ENCODE measurements at regions of chr10 and their contacts with region 1.

Region 1: DNA sequence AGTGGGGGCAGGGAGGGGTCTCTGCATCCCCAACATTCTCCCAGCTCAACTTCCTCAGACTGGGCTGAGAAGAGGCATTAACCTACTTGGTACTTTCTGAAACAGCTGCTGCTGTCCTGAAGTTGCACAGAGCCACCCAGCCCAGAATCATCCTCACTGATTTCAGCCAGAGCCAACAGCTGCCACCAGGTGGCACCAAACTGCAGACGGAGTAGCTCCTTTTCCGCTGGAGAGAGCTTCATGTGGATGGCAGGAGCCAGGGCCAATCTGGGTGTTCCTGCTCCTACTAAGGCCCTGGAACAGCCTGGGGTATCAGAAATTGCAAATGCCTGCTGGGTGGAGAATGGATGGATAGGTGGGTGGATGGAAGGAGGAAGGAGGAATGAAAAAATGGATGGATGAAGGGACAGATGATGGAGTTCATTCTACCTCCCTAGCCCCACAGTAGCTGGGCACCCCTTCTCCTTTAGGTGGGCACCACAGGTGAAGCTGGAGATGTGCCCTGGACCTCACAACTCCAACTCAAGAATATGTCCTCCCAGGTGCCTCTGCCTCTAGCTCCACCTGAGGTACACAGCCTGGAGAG is 11.8 kb upstream of the DRGX start:
- H3K4me3 Mint-ChIP-seq: no peak overlapping the region
- H3K27ac Mint-ChIP-seq: no peak overlapping the region
- H3K4me1 Mint-ChIP-seq: peaks cover 15% of the 10 kb centered on the region
- H3K27me3 Mint-ChIP-seq: peaks cover 71% of the 10 kb centered on the region

Region 2: DNA sequence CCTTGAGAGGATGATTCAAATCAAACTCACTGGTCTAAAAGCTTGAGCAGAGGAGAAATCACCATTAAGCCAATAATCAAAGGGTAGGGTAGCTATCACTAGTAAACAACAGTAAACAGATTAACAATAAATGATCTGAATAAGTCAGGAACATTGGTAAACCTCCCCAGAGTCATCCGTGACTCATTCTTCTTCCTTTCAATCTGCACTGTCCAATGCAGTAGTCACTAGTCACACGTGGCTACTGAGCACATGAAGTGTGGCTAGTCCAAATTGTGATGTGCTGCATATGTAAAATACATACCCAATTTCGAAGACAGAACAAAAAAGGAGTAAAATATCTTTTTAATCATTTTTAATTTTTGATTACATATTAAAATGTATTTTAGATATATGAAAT is 67.3 kb after region 1 on chr10:
- intact Hi-C with region 1: no loop called
- H3K4me3 Mint-ChIP-seq: no peak overlapping the region
- H3K27ac Mint-ChIP-seq: no peak overlapping the region
- H3K4me1 Mint-ChIP-seq: no peaks in the 10 kb centered on the region
- H3K27me3 Mint-ChIP-seq: no peaks in the 10 kb centered on the region

Region 3: DNA sequence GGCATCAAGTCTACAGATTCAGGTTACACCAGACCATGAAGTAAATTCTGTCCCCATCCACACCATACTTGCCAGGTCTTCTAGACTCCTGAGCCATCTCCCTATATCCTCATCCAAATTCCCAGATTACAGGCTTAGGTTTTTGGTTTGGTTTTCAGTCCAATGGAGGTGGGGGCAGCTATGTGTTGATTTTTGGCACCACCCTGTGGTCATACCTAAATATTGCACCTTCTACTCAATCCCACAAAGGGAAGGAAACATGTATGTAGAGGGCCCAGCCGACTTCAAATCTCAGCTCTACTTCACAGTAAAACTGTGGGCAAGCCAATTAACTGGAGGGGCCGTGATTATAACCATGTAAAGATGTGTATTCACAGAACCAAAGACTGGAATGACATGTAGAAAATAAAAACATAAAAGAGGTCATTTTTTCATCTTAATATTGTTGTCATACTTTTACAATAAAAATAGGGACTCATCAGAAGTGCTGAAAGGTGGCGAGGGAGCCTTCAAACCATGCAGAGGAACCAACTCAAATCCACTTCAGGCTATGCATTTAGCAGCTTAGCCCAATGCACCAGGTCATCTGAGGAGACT is 111.4 kb after region 1 on chr10:
- intact Hi-C with region 1: loop called (anchors 2 kb)
- H3K4me3 Mint-ChIP-seq: no peak overlapping the region
- H3K27ac Mint-ChIP-seq: no peak overlapping the region
- H3K4me1 Mint-ChIP-seq: peaks cover 18% of the 10 kb centered on the region
- H3K27me3 Mint-ChIP-seq: no peaks in the 10 kb centered on the region

Region 4: GRCh38 chr10:49562893-49563292 is 155.2 kb after region 1 on chr10:
- intact Hi-C with region 1: no loop called
- H3K4me3 Mint-ChIP-seq: no peak overlapping the region
- H3K27ac Mint-ChIP-seq: no peak overlapping the region
- H3K4me1 Mint-ChIP-seq: peaks cover 4% of the 10 kb centered on the region
- H3K27me3 Mint-ChIP-seq: peaks cover 34% of the 10 kb centered on the region